Prostate gland (tissue), 2 donors: ENCODE measurements at regions of chr7 and their contacts with region 1.

Region 1: DNA sequence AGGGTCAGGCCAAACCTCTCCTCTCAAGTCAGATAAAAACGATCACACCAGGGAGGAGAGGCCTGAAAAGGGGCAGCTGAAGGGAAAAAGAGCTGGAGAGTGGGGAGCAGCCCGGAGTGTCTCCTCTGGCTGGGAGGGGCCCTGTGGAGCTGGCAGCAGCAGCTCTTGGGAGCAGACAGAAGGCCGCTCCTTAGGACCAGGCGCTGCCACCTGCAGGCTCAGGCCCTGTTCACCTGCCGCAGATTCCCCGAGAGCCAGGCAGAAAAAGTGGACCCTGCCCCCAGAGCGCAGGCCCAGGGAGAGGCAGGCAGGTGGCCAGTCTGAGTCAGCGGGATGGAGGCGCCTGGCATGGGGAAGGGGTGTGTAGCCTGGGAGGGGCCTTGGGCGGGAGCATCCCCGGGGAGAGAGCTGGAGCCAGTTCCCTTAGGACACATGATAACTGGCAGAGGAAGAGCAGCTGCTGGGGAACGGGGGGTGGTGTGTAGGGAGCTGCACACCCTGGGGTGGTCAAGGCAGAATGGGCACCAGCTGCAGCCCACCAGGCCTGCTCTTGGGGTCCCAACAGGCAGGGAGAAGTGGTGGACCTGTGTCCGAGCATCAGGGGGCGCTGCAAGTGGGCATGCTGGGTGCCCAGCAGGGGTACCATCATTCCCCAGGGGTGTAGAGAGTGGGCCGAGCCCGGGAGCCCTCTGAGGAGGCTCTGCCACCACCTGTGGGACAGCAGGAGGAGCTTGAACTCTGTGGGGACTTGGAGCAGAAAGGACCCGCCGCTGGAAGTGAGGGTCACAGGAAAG is 177.2 kb upstream of the RHEB start:
- DNase-seq: peak; percentile 35
- H3K4me3 ChIP-seq: no peak overlapping the region
- H3K27ac ChIP-seq: peak overlapping the region; percentile 75 to 77
- H3K4me1 ChIP-seq: peaks cover 12% of the 10 kb centered on the region
- H3K27me3 ChIP-seq: no peaks in the 10 kb centered on the region
- CTCF ChIP-seq: peak in 2 of 4 experiments; percentile 10 to 27
- POLR2A ChIP-seq: no peak

Region 2: DNA sequence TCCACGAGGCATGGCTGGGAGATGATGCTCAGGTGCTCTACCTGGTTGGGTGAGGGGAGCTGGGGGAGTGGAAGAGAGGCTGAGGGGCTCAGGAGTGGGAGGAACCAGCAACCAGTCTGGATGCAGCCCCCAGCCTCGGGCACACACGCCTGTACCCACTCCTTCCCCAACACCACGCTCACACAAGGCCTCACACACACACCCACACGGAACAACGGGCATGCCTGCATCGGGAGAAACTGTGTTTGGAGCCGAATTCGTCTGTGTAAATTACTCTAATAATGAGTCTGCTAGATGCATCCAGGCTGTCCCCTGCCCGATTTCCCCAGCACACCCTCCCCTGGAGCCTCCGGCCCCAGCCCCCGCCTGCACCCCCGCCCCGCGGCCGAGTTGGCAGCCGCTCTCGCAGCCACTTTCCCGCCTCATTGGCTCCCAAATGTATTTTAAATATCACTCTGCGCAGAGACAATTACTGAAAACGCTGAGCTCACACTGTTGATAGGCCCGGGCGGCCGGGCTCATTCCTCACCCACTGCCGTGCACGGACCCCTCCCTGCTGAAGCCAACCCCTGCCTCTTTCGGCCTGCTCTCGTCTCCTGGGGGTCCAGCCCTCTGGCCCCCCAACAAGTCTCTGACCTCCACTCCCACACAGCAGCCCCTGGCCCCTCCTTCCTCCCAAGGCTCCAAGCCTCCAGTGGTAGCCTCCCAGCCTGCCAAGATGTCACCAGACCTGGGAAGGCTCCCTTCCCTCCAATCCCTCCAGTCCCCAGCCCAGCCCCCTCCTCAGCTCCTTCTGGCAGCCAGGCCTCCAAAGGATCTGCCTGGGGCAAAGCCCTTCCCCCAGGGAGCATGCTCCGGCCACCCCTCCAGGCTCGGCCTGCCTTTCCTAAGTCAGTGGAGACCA is 497.7 kb before region 1 on chr7:
- intact Hi-C with region 1: no loop called
- DNase-seq: no peak
- H3K4me3 ChIP-seq: no peak overlapping the region
- H3K27ac ChIP-seq: no peak overlapping the region
- H3K4me1 ChIP-seq: no peaks in the 10 kb centered on the region
- H3K27me3 ChIP-seq: no peaks in the 10 kb centered on the region
- CTCF ChIP-seq: no peak
- POLR2A ChIP-seq: no peak

Region 3: GRCh38 chr7:151566897-151567320 is 130.0 kb before region 1 on chr7:
- intact Hi-C with region 1: loop called (anchors 5 kb)
- DNase-seq: peak; percentile 69
- H3K4me3 ChIP-seq: no peak overlapping the region
- H3K27ac ChIP-seq: peak overlapping the region; percentile 55 to 57
- H3K4me1 ChIP-seq: no peaks in the 10 kb centered on the region
- H3K27me3 ChIP-seq: no peaks in the 10 kb centered on the region
- CTCF ChIP-seq: no peak
- POLR2A ChIP-seq: no peak